ENCODE measurements at regions of chr5 and their contacts with region 1.

Region 1: DNA sequence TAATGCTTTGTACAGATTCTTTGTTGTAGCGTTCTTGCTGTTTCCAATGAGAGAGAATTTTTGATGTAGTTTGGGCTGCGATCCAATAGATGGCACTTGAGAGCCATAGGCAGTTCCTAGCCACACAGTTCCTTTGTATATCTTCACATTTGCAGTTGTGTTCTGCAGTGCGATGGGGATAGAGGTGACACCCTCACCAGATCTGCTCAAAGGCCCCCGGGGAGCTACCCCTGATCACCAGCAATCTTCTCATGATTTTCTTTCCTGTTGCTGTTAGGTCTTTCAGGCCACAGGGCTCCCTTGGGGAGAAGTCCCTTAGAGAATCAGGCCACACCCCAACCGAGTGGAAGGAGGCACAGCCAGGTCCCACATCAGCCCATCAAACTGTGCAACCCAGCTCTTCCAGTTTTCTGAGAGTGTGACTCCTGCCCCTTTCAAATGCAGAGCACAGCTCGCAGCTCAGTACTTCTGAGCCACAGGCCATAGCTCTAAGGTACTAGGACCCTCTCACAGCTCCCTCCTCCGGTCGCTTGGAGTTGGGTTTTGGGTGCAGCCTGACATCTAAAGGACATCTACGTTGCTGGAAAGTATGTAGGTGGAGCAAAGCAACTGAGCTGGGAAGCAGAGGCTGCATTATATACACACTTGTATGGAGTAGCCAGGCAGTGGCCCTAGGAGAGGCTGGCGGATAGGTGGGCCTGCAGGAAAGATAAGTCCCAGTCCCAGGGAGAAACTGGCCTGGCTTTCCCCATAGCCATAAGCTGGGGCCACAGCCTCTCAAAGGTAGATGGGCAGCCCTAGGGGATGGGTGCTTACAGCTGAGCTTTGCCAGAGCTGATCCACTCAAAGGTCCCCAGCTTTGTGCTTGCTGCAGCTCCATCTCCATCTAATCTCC is 353.5 kb downstream of the SLCO4C1 start:
- DNase-seq: peak; percentile 5
- H3K4me3 Mint-ChIP-seq: no peak overlapping the region
- H3K27ac Mint-ChIP-seq: no peak overlapping the region
- H3K4me1 Mint-ChIP-seq: no peaks in the 10 kb centered on the region
- H3K27me3 Mint-ChIP-seq: no peaks in the 10 kb centered on the region

Region 2: GRCh38 chr5:101977729-101978345 is 35.3 kb after region 1 on chr5:
- CTCF ChIA-PET with region 1: interaction called, 13 read pairs
- intact Hi-C with region 1: loop called (anchors 1 kb)
- DNase-seq: no peak
- H3K4me3 Mint-ChIP-seq: no peak overlapping the region
- H3K27ac Mint-ChIP-seq: no peak overlapping the region
- H3K4me1 Mint-ChIP-seq: no peaks in the 10 kb centered on the region
- H3K27me3 Mint-ChIP-seq: no peaks in the 10 kb centered on the region

Region 3: DNA sequence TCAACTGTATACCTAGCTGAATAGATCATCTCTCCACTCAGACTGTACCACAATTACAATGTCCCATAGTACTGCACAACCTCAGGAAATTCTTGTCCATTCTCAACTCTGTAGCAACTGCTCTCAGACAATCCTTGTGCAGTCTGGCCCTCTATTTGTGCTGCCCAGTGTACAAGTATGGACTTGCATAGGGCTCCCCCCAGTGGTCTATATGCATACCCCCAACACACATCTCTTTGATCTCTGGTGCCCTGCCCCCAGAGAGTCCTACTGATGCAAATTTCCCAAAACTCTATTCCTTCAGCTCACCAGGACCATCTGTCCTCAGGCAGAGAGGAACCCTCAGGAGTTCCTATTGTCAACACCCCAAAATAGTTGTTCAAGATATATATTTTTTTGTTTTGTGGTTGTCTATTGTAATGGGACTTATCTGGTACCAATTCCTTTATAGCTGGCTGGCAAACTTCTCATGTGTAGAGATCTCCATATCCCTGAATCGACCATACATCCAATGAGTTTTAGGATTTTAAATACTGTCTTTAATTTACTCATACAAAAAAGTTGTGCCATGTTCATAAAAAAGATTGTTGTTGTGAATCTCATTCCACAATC is 148.3 kb after region 1 on chr5:
- CTCF ChIA-PET with region 1: no interaction called
- intact Hi-C with region 1: loop called (anchors 2 kb)
- DNase-seq: no peak
- H3K4me3 Mint-ChIP-seq: no peak overlapping the region
- H3K27ac Mint-ChIP-seq: no peak overlapping the region
- H3K4me1 Mint-ChIP-seq: no peaks in the 10 kb centered on the region
- H3K27me3 Mint-ChIP-seq: no peaks in the 10 kb centered on the region

Region 4: DNA sequence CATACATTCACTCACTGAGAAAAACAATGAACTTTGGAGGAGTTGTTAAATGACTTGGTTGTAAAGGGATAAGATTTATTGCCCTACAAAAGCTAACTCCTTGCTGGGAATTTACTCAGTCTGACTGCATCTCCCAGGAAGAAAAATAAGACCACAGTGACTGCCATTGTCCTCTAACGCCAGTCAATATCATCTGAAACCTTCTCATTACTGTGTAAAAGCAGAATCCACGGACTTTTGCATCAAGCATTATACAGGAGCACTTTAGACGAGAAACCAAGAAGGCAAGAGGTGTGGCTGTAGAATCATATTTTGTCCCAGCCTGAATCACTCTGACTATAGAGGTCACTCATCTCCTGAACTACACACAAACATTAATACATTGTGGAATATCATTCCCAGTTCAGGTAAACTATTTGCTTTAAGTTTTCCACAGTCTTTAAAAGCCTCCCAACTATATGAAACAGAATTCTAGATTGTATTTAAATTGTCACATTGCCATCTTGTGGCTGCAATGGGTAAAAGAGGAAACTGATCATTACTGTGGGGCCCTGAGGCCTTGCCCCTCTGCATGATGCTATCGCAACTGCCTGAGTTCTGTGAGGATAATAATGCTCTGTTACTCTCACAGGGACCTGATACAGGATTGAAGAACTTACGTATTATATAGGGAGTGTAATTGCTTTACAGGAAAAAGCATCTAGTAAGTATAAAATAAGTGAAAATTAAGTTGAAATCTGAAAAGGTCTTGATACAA is 210.6 kb after region 1 on chr5:
- CTCF ChIA-PET with region 1: interaction called, 4 read pairs
- intact Hi-C with region 1: loop called (anchors 1 kb)
- DNase-seq: no peak
- H3K4me3 Mint-ChIP-seq: no peak overlapping the region
- H3K27ac Mint-ChIP-seq: no peak overlapping the region
- H3K4me1 Mint-ChIP-seq: no peaks in the 10 kb centered on the region
- H3K27me3 Mint-ChIP-seq: no peaks in the 10 kb centered on the region

Region 5: GRCh38 chr5:102223542-102224477 is 281.2 kb after region 1 on chr5:
- CTCF ChIA-PET with region 1: interaction called, 5 read pairs
- intact Hi-C with region 1: loop called (anchors 1 kb)
- DNase-seq: no peak
- H3K4me3 Mint-ChIP-seq: no peak overlapping the region
- H3K27ac Mint-ChIP-seq: no peak overlapping the region
- H3K4me1 Mint-ChIP-seq: no peaks in the 10 kb centered on the region
- H3K27me3 Mint-ChIP-seq: peaks cover 4% of the 10 kb centered on the region

Region 6: DNA sequence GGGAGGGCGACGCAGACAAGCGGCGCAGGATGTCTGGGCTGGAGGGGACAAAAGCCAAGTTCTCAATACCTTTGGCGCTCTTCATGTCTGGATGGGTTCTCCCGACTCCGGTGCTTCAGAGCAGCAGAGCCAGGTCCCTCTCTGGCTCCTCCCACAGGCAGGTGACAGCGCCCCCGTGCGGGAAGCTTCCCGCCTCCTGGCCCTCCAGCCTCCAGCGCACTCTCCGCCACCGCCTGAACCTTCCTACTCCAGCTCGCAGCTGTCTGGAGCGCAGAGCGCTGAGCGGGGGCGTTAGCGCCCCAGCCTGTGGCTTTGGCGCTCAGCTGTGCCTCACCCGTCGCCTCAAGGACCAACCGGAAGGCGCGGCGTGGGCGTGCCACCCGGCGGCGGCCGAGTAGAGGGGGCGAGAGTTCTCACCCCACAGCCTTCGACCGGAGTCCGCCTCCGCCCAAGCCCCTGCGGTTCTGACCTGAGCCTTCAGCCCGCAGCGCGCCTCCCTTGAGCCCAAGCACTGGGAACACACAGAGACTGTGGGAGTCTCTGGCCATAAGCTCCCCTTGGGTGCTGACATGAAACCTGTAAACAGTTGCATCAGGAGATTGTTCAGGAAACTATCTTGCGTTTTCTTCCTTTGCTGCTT is 353.7 kb after region 1 on chr5 and contains the start of gene SLCO4C1:
- CTCF ChIA-PET with region 1: no interaction called
- intact Hi-C with region 1: no loop called
- DNase-seq: peak; percentile 88
- H3K4me3 Mint-ChIP-seq: peak within 1 kb of the TSS; percentile 76
- H3K27ac Mint-ChIP-seq: no peak within 1 kb of the TSS
- H3K4me1 Mint-ChIP-seq: peaks cover 19% of the 10 kb centered on the region
- H3K27me3 Mint-ChIP-seq: peaks cover 8% of the 10 kb centered on the region
- total RNA-seq, gene SLCO4C1: 0.07 TPM in 1 of 2 experiments, not detected in the other

Region 7: DNA sequence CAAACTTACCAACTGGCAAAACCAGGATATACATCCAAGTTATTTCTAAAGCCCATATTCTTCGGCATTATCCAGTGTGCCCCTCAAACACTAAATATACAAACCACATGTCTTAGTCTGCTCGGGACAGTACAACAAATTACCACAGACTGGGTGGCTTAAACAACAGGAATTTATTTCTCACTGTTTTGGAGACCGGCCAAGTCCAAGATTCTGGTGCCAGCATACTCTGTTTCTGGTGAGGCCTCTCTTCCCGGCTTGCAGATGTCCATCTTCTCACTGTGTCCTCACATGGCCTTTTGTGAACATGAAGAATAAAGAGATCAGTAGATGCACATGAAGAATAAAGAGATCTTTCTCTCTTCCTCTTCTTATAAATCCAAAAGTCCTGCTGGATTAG is 569.1 kb after region 1 on chr5:
- CTCF ChIA-PET with region 1: no interaction called
- intact Hi-C with region 1: loop called (anchors 10 kb)
- DNase-seq: no peak
- H3K4me3 Mint-ChIP-seq: no peak overlapping the region
- H3K27ac Mint-ChIP-seq: no peak overlapping the region
- H3K4me1 Mint-ChIP-seq: no peaks in the 10 kb centered on the region
- H3K27me3 Mint-ChIP-seq: no peaks in the 10 kb centered on the region